Activated CD4-positive, alpha-beta T cell treated with anti-CD3 and anti-CD28 coated beads for 36 hours (primary cell): ENCODE measurements at regions of chr1 and their contacts with region 1.

Region 1: GRCh38 chr1:23691499-23692307 is at the start of gene RPL11:
- DNase-seq: peak; percentile 93
- ATAC-seq: peak; percentile 98
- H3K4me3 Mint-ChIP-seq: peak within 1 kb of the TSS; percentile 97
- H3K27ac Mint-ChIP-seq: peak within 1 kb of the TSS; percentile 98
- H3K4me1 Mint-ChIP-seq: peaks cover 43% of the 10 kb centered on the region
- H3K27me3 Mint-ChIP-seq: peaks cover under 1% of the 10 kb centered on the region
- total RNA-seq, gene RPL11: 1,003 to 1,481 TPM

Region 2: GRCh38 chr1:23168457-23169194 is 523.1 kb before region 1 on chr1 and contains the start of gene LUZP1:
- CTCF ChIA-PET with region 1: no interaction called
- POLR2A ChIA-PET with region 1: no interaction called
- intact Hi-C with region 1: loop called in 1 of 2 experiments (anchors 2 kb)
- DNase-seq: peak; percentile 94
- ATAC-seq: peak; percentile 85
- H3K4me3 Mint-ChIP-seq: peak within 1 kb of the TSS; percentile 97
- H3K27ac Mint-ChIP-seq: peak within 1 kb of the TSS; percentile 86
- H3K4me1 Mint-ChIP-seq: peaks cover 27% of the 10 kb centered on the region
- H3K27me3 Mint-ChIP-seq: no peaks in the 10 kb centered on the region
- total RNA-seq, gene LUZP1: 13.2 to 13.6 TPM

Region 3: GRCh38 chr1:23530747-23531561 is 160.7 kb before region 1 on chr1 and contains the start of gene E2F2:
- CTCF ChIA-PET with region 1: interaction called, 4 read pairs
- POLR2A ChIA-PET with region 1: interaction called, 4 read pairs
- intact Hi-C with region 1: loop called in 1 of 2 experiments (anchors 2 kb)
- DNase-seq: peak; percentile 91
- ATAC-seq: peak; percentile 81
- H3K4me3 Mint-ChIP-seq: peak within 1 kb of the TSS; percentile 84
- H3K27ac Mint-ChIP-seq: peak within 1 kb of the TSS; percentile 95
- H3K4me1 Mint-ChIP-seq: peaks cover 68% of the 10 kb centered on the region
- H3K27me3 Mint-ChIP-seq: no peaks in the 10 kb centered on the region
- total RNA-seq, gene E2F2: 25.0 to 32.0 TPM

Region 4: GRCh38 chr1:23751050-23751814 is 59.5 kb after region 1 on chr1:
- CTCF ChIA-PET with region 1: interaction called, 23 read pairs
- POLR2A ChIA-PET with region 1: interaction called, 7 read pairs
- intact Hi-C with region 1: loop called in 1 of 2 experiments (anchors 1 kb)
- DNase-seq: peak; percentile 63
- ATAC-seq: peak; percentile 80
- H3K4me3 Mint-ChIP-seq: no peak overlapping the region
- H3K27ac Mint-ChIP-seq: peak overlapping the region; percentile 43
- H3K4me1 Mint-ChIP-seq: peaks cover 27% of the 10 kb centered on the region
- H3K27me3 Mint-ChIP-seq: no peaks in the 10 kb centered on the region

Region 5: DNA sequence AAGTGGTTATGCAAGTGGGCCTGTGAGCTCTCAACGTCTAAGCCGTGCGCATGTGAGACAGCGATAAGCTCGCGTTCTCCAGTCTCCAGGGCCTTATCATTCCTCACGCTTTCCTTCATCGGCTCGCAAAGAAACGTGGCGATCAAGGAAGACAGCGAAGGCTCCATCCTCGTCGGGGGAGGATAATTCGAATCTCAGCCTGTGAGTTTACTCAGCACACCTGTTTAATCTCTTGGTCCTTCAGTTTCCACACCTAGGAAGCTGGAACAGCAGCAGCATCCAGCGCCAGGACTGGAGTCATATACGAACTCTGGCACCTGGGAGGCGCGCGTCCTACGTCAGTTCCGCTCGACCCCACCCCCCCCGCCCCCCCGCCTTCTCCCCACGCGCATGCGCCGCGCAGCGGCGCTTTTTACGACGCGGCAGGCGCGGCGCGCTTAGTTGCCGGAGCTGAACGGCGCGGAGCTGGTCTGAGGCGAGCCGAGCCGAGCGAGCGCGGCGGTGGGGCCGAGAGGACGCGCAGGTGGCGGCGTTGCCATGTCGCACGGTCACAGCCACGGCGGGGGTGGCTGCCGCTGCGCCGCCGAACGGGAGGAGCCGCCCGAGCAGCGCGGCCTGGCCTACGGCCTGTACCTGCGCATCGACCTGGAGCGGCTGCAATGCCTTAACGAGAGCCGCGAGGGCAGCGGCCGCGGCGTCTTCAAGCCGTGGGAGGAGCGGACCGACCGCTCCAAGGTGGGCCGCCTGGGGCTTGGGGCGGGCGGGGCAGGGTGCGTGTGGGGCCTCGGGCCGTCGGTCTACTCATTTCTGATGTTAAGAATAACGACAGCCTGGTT is 86.5 kb after region 1 on chr1 and contains the start of gene PITHD1:
- CTCF ChIA-PET with region 1: interaction called, 4 read pairs
- POLR2A ChIA-PET with region 1: interaction called, 3 read pairs
- intact Hi-C with region 1: loop called in 1 of 2 experiments (anchors 1 kb)
- DNase-seq: peak; percentile 90
- ATAC-seq: peak; percentile 87
- H3K4me3 Mint-ChIP-seq: peak within 1 kb of the TSS; percentile 87
- H3K27ac Mint-ChIP-seq: peak within 1 kb of the TSS; percentile 87
- H3K4me1 Mint-ChIP-seq: peaks cover 43% of the 10 kb centered on the region
- H3K27me3 Mint-ChIP-seq: no peaks in the 10 kb centered on the region
- total RNA-seq, gene PITHD1: 53.1 to 64.1 TPM

Region 6: GRCh38 chr1:23867953-23868556 is 176.4 kb after region 1 on chr1 and contains the start of gene FUCA1:
- CTCF ChIA-PET with region 1: interaction called, 4 read pairs
- POLR2A ChIA-PET with region 1: no interaction called
- intact Hi-C with region 1: loop called in 1 of 2 experiments (anchors 1 kb)
- DNase-seq: peak; percentile 95
- ATAC-seq: peak; percentile 97
- H3K4me3 Mint-ChIP-seq: peak within 1 kb of the TSS; percentile 76
- H3K27ac Mint-ChIP-seq: peak within 1 kb of the TSS; percentile 77
- H3K4me1 Mint-ChIP-seq: peaks cover 19% of the 10 kb centered on the region
- H3K27me3 Mint-ChIP-seq: no peaks in the 10 kb centered on the region
- total RNA-seq, gene FUCA1: 4.2 to 4.5 TPM